Activated naive CD4-positive, alpha-beta T cell treated with anti-CD3 and anti-CD28 coated beads for 36 hours (primary cell): ENCODE measurements at regions of chr12 and their contacts with region 1.

Region 1: DNA sequence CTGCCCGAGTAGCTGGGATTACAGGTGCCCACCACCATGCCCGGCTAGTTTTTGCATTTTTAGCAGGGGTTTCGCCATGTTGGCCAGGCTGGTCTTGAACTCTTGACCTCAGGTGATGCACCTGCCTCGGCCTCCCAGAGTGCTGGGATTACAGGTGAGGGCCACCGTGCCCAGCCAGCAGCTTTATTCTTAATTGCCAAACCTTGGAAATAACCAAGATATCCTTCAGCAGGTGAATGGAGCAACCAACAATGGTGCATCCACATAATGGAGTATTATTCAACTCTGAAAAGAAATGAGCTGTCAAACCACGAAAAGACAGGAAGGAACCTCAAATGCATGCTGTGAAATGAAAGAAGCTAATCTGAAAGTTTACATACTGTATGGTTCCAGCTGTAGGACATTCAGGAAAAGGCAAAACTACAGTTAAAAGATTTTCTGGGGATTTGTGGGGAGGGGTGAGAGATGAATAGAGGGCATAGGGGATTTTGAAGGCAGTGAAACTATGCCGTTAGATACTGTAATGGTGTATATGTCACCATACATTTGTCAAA is 118.8 kb upstream of the CCND2 start:
- DNase-seq: peak; percentile 8
- H3K4me3 Mint-ChIP-seq: no peak overlapping the region
- H3K27ac Mint-ChIP-seq: peak overlapping the region; percentile 98
- H3K4me1 Mint-ChIP-seq: peaks cover 81% of the 10 kb centered on the region
- H3K27me3 Mint-ChIP-seq: no peaks in the 10 kb centered on the region

Region 2: GRCh38 chr12:4169959-4170358 is 15.2 kb after region 1 on chr12:
- CTCF ChIA-PET with region 1: interaction called, 29 read pairs
- intact Hi-C with region 1: loop called (anchors 1 kb)
- DNase-seq: peak; percentile 79
- H3K4me3 Mint-ChIP-seq: no peak overlapping the region
- H3K27ac Mint-ChIP-seq: peak overlapping the region; percentile 82
- H3K4me1 Mint-ChIP-seq: peaks cover 39% of the 10 kb centered on the region
- H3K27me3 Mint-ChIP-seq: no peaks in the 10 kb centered on the region

Region 3: DNA sequence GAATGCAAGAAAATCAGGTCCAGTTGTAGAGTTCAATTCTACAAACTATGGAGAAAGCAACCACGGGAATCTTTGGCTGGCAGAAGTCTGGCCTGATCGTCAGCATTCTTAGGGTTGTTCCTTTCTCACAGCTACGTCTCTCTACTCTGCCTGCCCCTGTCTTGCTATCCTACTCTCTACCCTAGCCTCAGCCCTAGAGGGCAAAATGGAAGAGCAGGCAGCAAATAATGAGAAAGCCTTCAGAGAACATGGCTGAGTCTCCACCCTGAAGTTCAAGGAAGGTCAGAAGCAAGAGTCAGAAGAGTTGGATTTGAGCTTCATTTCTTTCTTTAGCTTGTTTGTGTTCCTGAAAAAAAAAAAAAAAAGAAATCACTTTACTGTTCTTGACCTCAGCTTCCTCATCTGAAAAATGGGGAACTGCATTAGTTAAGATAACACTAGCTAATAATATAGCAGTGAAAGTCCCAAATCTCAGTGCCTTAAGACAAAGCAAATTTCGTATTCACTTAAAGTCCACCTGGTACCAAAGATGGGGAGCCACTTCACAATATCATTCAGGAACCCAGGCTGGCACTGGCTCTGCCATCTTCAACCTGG is 68.6 kb after region 1 on chr12:
- CTCF ChIA-PET with region 1: no interaction called
- intact Hi-C with region 1: no loop called
- DNase-seq: no peak
- H3K4me3 Mint-ChIP-seq: no peak overlapping the region
- H3K27ac Mint-ChIP-seq: no peak overlapping the region
- H3K4me1 Mint-ChIP-seq: peaks cover 8% of the 10 kb centered on the region
- H3K27me3 Mint-ChIP-seq: peaks cover 3% of the 10 kb centered on the region